Dendritic cell treated with granulocyte-macrophage colony-stimulating factor and Interleukin-4, amounts not matched to agents 40 ng/mL and 50 ng/mL, for 4 days (primary cell): ENCODE measurements at regions of chr17 and their contacts with region 1.

Region 1: GRCh38 chr17:59859444-59860025 is 33.2 kb downstream of the TUBD1 start:
- H3K4me3 Mint-ChIP-seq: no peak overlapping the region
- H3K27ac Mint-ChIP-seq: no peak overlapping the region
- H3K4me1 Mint-ChIP-seq: peaks cover 19% of the 10 kb centered on the region
- H3K27me3 Mint-ChIP-seq: no peaks in the 10 kb centered on the region

Region 2: GRCh38 chr17:59620528-59621259 is 238.8 kb before region 1 on chr17:
- intact Hi-C with region 1: no loop called
- H3K4me3 Mint-ChIP-seq: peak overlapping the region; percentile 90
- H3K27ac Mint-ChIP-seq: peak overlapping the region; percentile 99
- H3K4me1 Mint-ChIP-seq: peaks cover 25% of the 10 kb centered on the region
- H3K27me3 Mint-ChIP-seq: no peaks in the 10 kb centered on the region

Region 3: DNA sequence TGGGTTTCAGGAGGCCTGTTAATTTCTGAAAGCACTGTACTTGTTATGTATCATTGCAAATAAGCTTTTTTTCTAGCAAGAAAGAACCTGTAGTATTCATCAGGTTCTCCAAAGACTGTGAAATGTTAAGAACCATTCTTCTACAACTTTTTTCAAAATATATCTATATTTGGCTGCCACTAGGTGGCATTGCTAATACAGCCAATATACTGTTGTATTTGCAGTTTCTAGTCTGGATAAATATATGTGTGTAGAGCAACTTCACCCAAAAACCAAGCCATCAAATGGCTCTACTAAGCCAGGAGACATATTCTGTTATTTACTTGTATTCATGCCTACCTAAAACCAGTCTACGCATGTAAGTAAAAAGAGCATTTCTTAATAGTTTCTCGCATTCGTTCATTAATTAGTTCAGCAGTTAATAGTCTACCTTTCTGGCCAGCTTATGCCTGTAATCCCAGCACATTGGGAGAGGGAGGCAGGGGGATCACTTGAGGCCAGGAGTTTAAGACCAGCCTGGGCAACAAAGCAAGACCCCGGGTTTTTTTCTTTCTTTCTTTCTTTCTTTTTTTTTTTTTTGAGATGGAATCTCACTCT is 112.6 kb before region 1 on chr17:
- intact Hi-C with region 1: loop called (anchors 1 kb)
- H3K4me3 Mint-ChIP-seq: no peak overlapping the region
- H3K27ac Mint-ChIP-seq: peak overlapping the region; percentile 60
- H3K4me1 Mint-ChIP-seq: peaks cover 10% of the 10 kb centered on the region
- H3K27me3 Mint-ChIP-seq: no peaks in the 10 kb centered on the region

Region 4: DNA sequence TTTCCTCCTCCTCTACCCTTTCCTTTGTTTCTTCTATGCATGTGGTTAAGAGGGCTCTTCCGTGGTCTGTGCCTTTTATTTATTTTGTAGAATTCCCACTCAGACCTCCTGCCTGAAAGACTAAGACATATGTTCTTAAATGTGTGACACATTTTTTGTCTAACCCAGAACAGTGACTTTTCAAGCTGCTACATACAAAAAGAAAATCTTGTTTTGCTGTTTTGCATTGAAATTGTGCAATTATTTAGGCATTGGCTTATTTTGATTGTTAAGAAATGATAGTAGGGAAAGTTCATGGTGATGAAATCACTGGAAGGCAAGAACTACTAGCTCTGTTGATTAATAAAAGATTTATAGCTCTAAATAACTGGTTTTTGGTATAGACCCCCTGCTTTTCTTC is 43.6 kb before region 1 on chr17:
- intact Hi-C with region 1: no loop called
- H3K4me3 Mint-ChIP-seq: no peak overlapping the region
- H3K27ac Mint-ChIP-seq: peak overlapping the region; percentile 60
- H3K4me1 Mint-ChIP-seq: peaks cover 52% of the 10 kb centered on the region
- H3K27me3 Mint-ChIP-seq: no peaks in the 10 kb centered on the region